ENCODE measurements at regions of chr2 and their contacts with region 1.

Region 1: GRCh38 chr2:180319586-180320405 is 312.7 kb upstream of the CWC22 start:
- DNase-seq: no peak
- H3K4me3 Mint-ChIP-seq: no peak overlapping the region
- H3K27ac Mint-ChIP-seq: no peak overlapping the region
- H3K4me1 Mint-ChIP-seq: peaks cover 18% of the 10 kb centered on the region
- H3K27me3 Mint-ChIP-seq: no peaks in the 10 kb centered on the region
- CTCF ChIP-seq: no peak

Region 2: DNA sequence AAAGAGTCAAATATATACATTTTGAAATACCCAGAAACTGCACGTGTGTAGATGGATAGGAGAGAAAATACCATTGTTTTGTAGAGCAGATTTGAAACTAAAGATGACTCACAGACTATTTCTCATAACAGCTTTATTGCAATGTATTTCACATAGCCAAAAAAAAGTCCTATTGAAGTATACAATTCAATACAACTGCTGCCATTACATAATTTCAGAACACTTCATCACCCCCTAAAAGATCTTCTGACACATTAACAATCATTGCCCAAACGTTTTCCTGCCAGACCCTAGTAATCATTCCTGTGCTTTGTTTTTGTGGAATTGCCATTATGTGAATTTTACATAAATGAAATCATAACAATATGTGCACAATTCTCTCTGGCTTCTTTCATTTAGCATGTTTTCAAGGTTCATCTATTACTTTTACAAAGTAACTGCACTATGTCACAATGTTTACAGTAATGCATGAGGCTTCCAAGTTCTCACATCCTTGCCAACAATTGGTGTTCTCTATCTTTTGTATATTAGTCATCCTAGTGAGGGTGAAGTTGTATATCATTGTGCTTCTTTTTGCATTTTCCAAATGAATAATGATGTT is 65.9 kb after region 1 on chr2:
- CTCF ChIA-PET with region 1: no interaction called
- POLR2A ChIA-PET with region 1: no interaction called
- intact Hi-C with region 1: loop called (anchors 5 kb)
- DNase-seq: peak; percentile 78
- H3K4me3 Mint-ChIP-seq: no peak overlapping the region
- H3K27ac Mint-ChIP-seq: peak overlapping the region; percentile 78
- H3K4me1 Mint-ChIP-seq: peaks cover 16% of the 10 kb centered on the region
- H3K27me3 Mint-ChIP-seq: no peaks in the 10 kb centered on the region
- CTCF ChIP-seq: no peak

Region 3: GRCh38 chr2:180571559-180571958 is 251.8 kb after region 1 on chr2:
- CTCF ChIA-PET with region 1: no interaction called
- POLR2A ChIA-PET with region 1: no interaction called
- intact Hi-C with region 1: no loop called
- DNase-seq: no peak
- H3K4me3 Mint-ChIP-seq: no peak overlapping the region
- H3K27ac Mint-ChIP-seq: peak overlapping the region; percentile 28
- H3K4me1 Mint-ChIP-seq: peaks cover 19% of the 10 kb centered on the region
- H3K27me3 Mint-ChIP-seq: no peaks in the 10 kb centered on the region
- CTCF ChIP-seq: no peak

Region 4: DNA sequence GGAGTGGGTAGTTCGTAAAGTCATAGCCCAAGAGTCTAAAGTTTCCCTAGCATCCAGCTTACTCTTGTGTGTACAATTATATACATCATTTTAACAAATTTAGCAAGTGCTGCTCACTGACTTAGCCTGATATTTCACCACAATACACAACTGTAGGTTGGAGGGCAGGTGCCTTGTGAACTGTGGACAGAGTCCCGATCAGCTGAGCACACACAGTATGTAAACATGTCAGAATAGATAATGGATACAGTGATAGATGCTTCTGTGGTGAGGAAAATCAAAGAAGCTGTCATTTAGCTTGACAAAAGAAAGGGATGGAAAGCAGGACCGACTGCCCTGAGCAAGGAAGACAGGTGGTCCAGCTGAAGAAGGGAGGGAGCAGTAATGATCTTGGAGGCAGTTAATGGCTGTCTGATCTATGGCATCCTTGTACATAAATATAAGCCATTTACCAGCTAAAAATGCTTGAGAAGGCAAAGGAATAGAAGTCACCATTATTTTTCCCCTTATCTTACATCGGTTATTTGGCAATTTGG is 287.8 kb after region 1 on chr2:
- CTCF ChIA-PET with region 1: no interaction called
- POLR2A ChIA-PET with region 1: no interaction called
- intact Hi-C with region 1: no loop called
- DNase-seq: no peak
- H3K4me3 Mint-ChIP-seq: no peak overlapping the region
- H3K27ac Mint-ChIP-seq: no peak overlapping the region
- H3K4me1 Mint-ChIP-seq: no peaks in the 10 kb centered on the region
- H3K27me3 Mint-ChIP-seq: no peaks in the 10 kb centered on the region
- CTCF ChIP-seq: no peak